Sciatic nerve (tissue), 2 donors: ENCODE measurements at regions of chr12 and their contacts with region 1.

Region 1: DNA sequence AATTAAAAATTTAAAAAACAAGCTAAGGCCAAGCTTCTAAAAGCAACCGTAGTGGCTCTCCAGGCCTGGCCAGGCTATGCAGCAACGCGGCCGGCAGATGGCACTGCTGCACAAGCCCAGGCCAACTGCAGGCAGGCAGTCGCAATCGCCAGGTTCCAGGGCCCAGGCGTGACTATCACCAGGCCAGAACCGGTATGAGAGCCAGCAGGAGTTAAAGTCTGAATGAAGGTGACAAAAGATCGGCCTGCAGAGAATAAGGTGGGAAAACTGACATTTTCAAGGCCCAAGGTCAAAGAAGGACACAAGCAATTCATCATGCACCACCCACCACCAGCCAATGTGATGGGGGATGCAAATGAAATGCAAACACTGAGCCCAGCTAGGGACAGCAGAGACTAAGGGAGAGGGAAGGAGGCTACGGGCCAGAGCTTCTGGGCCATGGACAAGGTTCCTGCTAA is 43.6 kb upstream of the ANO2 start:
- DNase-seq: peak; percentile 86
- ATAC-seq: peak; percentile 95

Region 2: GRCh38 chr12:6026998-6027397 is 38.3 kb after region 1 on chr12:
- intact Hi-C with region 1: no loop called
- DNase-seq: no peak
- ATAC-seq: no peak

Region 3: DNA sequence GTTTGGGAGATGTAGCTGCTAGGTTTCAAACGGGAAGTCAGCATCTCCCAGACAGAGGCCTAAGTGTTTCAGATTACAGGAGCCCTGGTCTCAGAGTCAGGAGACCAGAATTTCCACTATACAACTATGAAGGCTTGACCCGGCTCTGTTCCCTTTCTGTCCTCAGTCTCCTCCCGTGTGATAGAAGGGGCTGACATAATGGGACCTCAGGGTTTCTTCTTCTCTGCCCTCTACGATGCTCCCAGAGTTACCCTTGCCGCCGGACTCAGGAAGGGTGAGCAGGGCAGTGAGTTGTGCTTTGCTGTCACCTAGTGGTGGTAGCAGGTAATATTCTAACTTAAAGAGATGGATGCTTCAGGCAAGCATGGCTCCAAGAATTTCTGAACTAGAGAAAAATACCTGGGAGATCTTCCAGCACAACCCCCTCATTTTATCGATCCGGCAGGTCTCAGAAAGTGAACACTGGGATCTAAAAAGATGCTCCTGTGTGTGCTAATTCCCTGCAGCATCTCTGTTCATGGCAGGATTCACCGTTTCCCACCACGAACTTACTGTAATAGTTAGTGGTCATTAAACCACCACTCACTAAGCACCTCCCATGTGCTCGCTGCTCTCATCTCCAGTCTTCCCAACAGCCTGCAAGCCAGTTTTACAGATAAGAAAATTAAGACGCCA is 51.3 kb after region 1 on chr12:
- intact Hi-C with region 1: loop called (anchors 2 kb)
- DNase-seq: no peak
- ATAC-seq: peak; percentile 93

Region 4: GRCh38 chr12:6062757-6063735 is 74.4 kb after region 1 on chr12:
- intact Hi-C with region 1: no loop called
- DNase-seq: no peak
- ATAC-seq: peak; percentile 72

Region 5: GRCh38 chr12:6285063-6285477 is 296.4 kb after region 1 on chr12:
- intact Hi-C with region 1: loop called (anchors 10 kb)
- DNase-seq: no peak
- ATAC-seq: peak; percentile 88